ENCODE measurements at regions of chr19 and their contacts with region 1.

Region 1: GRCh38 chr19:35509861-35510625 is 3.4 kb downstream of the DMKN start:
- DNase-seq: no peak
- H3K4me3 ChIP-seq: peak overlapping the region; percentile 41
- H3K27ac ChIP-seq: no peak overlapping the region
- H3K27me3 ChIP-seq: peaks cover 47% of the 10 kb centered on the region
- CTCF ChIP-seq: peak; percentile 89

Region 2: GRCh38 chr19:35449053-35449687 is 60.9 kb before region 1 on chr19:
- CTCF ChIA-PET with region 1: no interaction called
- POLR2A ChIA-PET with region 1: no interaction called
- DNase-seq: no peak
- H3K4me3 ChIP-seq: no peak overlapping the region
- H3K27ac ChIP-seq: no peak overlapping the region
- H3K27me3 ChIP-seq: peaks cover 7% of the 10 kb centered on the region
- CTCF ChIP-seq: no peak

Region 3: GRCh38 chr19:35495107-35496064 is 14.7 kb before region 1 on chr19:
- CTCF ChIA-PET with region 1: interaction called, 17 read pairs
- POLR2A ChIA-PET with region 1: no interaction called
- DNase-seq: peak; percentile 10
- H3K4me3 ChIP-seq: no peak overlapping the region
- H3K27ac ChIP-seq: no peak overlapping the region
- H3K27me3 ChIP-seq: peaks cover 7% of the 10 kb centered on the region
- CTCF ChIP-seq: peak; percentile 96

Region 4: GRCh38 chr19:35545001-35545911 is 35.2 kb after region 1 on chr19 and contains the start of gene TMEM147:
- CTCF ChIA-PET with region 1: interaction called, 10 read pairs
- POLR2A ChIA-PET with region 1: no interaction called
- DNase-seq: peak; percentile 20
- H3K4me3 ChIP-seq: peak within 1 kb of the TSS; percentile 88
- H3K27ac ChIP-seq: peak within 1 kb of the TSS; percentile 68
- H3K27me3 ChIP-seq: no peaks in the 10 kb centered on the region
- CTCF ChIP-seq: no peak
- polyA plus RNA-seq, gene TMEM147: 88.7 and 116 TPM in 2 replicates

Measured in AG04450 (cell line).